Activated T-helper 1 cell treated with anti-CD3 and anti-CD28 coated beads, Interleukin-12 subunit alpha, Interleukin-12 subunit beta, Interleukin-2, Interleukin-4 antibody, amounts not matched to agents 30 ng/mL and 10 ng/mL and 1 ng/mL, durations not matched to agents 14 hours and 24 hours and 36 hours (primary cell): ENCODE measurements at regions of chr9 and their contacts with region 1.

Region 1: GRCh38 chr9:137618105-137619067 is at the start of gene EHMT1:
- DNase-seq: peak; percentile 91
- H3K4me3 Mint-ChIP-seq: peak within 1 kb of the TSS; percentile 90
- H3K27ac Mint-ChIP-seq: peak within 1 kb of the TSS; percentile 92
- H3K4me1 Mint-ChIP-seq: peaks cover 29% of the 10 kb centered on the region
- H3K27me3 Mint-ChIP-seq: no peaks in the 10 kb centered on the region
- total RNA-seq, gene EHMT1: 97.0 and 98.1 TPM in 2 replicates

Region 2: GRCh38 chr9:136605988-136606660 is 1012.3 kb before region 1 on chr9:
- intact Hi-C with region 1: no loop called
- DNase-seq: no peak
- H3K4me3 Mint-ChIP-seq: no peak overlapping the region
- H3K27ac Mint-ChIP-seq: no peak overlapping the region
- H3K4me1 Mint-ChIP-seq: no peaks in the 10 kb centered on the region
- H3K27me3 Mint-ChIP-seq: peaks cover 9% of the 10 kb centered on the region

Region 3: GRCh38 chr9:137578518-137579258 is 39.7 kb before region 1 on chr9 and contains the start of gene DPH7:
- intact Hi-C with region 1: loop called (anchors 1 kb)
- DNase-seq: peak; percentile 93
- H3K4me3 Mint-ChIP-seq: peak within 1 kb of the TSS; percentile 88
- H3K27ac Mint-ChIP-seq: peak within 1 kb of the TSS; percentile 58
- H3K4me1 Mint-ChIP-seq: peaks cover 32% of the 10 kb centered on the region
- H3K27me3 Mint-ChIP-seq: no peaks in the 10 kb centered on the region
- total RNA-seq, gene DPH7: 50.3 and 52.1 TPM in 2 replicates

Region 4: DNA sequence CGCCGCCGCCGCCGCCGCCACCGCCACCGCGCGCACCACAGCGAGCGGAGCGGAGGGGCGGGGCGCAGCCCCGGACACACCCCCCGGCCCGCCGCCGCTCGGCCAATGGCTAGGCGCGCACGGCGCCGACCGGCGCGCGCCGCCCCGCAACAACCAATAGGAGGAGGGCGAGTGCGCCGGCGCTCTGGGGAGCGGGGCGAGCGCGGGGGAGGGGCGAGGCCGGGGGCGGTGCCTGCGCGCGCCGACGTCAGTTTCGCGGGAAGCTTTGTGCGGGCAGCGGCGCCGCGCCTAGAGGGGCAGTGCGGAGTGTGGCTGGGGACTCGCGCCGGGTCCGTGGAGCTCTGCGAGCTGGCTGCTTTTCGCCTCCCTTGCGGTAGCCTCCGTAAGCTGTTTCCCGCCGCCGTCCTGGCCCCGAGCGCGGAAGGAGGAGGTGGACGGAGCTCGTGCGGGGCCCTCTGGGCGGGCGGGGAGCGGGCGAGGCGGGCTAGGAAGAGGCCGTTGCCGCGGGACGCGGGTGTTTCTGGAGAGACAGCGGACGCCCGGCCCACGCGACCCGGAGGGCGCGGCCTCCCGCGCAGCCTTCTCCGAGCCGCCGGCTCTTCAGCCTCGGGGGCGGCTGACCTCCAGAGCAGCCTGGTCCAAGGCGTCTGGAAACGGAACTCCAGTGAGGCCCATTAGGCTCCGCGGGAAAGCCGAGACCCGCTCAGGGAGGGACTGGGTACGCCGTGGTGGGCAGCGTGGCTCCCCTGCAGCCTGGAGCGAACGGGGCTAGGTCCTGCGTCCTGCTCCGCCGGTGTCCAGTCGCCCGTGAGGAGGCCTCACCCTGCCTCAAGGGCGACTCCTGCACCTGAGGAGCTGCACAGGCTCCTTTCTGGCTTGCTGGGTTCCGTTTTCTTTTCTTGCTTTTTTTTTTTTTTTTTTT is 27.7 kb before region 1 on chr9 and contains the start of gene ZMYND19:
- intact Hi-C with region 1: loop called (anchors 1 kb)
- DNase-seq: peak; percentile 90
- H3K4me3 Mint-ChIP-seq: peak within 1 kb of the TSS; percentile 99
- H3K27ac Mint-ChIP-seq: peak within 1 kb of the TSS; percentile 97
- H3K4me1 Mint-ChIP-seq: peaks cover 21% of the 10 kb centered on the region
- H3K27me3 Mint-ChIP-seq: peaks cover 1% of the 10 kb centered on the region
- total RNA-seq, gene ZMYND19: 88.2 and 94.9 TPM in 2 replicates

Region 5: GRCh38 chr9:137605121-137606004 is 13.0 kb before region 1 on chr9 and contains the start of gene ARRDC1:
- intact Hi-C with region 1: loop called (anchors 1 kb)
- DNase-seq: peak; percentile 85
- H3K4me3 Mint-ChIP-seq: peak within 1 kb of the TSS; percentile 85
- H3K27ac Mint-ChIP-seq: peak within 1 kb of the TSS; percentile 74
- H3K4me1 Mint-ChIP-seq: peaks cover 20% of the 10 kb centered on the region
- H3K27me3 Mint-ChIP-seq: peaks cover 6% of the 10 kb centered on the region
- total RNA-seq, gene ARRDC1: 65.7 and 70.3 TPM in 2 replicates

Region 6: GRCh38 chr9:137632230-137633161 is 14.1 kb after region 1 on chr9:
- intact Hi-C with region 1: loop called (anchors 1 kb)
- DNase-seq: no peak
- H3K4me3 Mint-ChIP-seq: no peak overlapping the region
- H3K27ac Mint-ChIP-seq: no peak overlapping the region
- H3K4me1 Mint-ChIP-seq: peaks cover 43% of the 10 kb centered on the region
- H3K27me3 Mint-ChIP-seq: no peaks in the 10 kb centered on the region

Region 7: GRCh38 chr9:137866226-137867141 is 248.1 kb after region 1 on chr9:
- intact Hi-C with region 1: no loop called
- DNase-seq: no peak
- H3K4me3 Mint-ChIP-seq: no peak overlapping the region
- H3K27ac Mint-ChIP-seq: no peak overlapping the region
- H3K4me1 Mint-ChIP-seq: no peaks in the 10 kb centered on the region
- H3K27me3 Mint-ChIP-seq: peaks cover 4% of the 10 kb centered on the region